Spleen (tissue), 13 donors: ENCODE measurements at regions of chr7 and their contacts with region 1.

Region 1: DNA sequence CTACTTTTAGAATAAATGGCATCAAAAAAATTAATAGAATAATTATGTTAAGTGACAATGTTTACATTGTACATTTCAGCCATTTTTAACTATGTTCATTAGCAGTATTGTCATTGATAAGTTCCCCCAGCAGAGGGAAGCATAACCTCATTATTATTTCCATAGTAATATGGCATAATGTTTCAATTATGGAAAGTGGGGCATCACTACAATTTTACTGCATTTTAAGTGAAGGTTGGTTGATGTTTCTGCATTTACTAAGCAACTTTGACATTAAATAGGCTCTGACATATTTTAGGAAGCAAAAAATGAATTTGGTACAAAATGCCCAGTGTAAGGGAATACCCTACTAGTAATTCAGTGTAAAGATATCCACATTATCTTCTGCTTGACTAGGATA is 218.3 kb downstream of the SEMA3A start:
- DNase-seq: no peak
- H3K4me3 ChIP-seq: no peak overlapping the region
- H3K27ac ChIP-seq: no peak overlapping the region
- H3K4me1 ChIP-seq: no peaks in the 10 kb centered on the region
- H3K27me3 ChIP-seq: no peaks in the 10 kb centered on the region
- CTCF ChIP-seq: peak in 10 of 11 experiments; percentile 15 to 68 (median 58)
- POLR2A ChIP-seq: no peak

Region 2: GRCh38 chr7:84058311-84059076 is 82.2 kb after region 1 on chr7:
- intact Hi-C with region 1: no loop called
- DNase-seq: no peak
- H3K4me3 ChIP-seq: no peak overlapping the region
- H3K27ac ChIP-seq: no peak overlapping the region
- H3K4me1 ChIP-seq: no peaks in the 10 kb centered on the region
- H3K27me3 ChIP-seq: no peaks in the 10 kb centered on the region
- CTCF ChIP-seq: no peak
- POLR2A ChIP-seq: no peak

Region 3: DNA sequence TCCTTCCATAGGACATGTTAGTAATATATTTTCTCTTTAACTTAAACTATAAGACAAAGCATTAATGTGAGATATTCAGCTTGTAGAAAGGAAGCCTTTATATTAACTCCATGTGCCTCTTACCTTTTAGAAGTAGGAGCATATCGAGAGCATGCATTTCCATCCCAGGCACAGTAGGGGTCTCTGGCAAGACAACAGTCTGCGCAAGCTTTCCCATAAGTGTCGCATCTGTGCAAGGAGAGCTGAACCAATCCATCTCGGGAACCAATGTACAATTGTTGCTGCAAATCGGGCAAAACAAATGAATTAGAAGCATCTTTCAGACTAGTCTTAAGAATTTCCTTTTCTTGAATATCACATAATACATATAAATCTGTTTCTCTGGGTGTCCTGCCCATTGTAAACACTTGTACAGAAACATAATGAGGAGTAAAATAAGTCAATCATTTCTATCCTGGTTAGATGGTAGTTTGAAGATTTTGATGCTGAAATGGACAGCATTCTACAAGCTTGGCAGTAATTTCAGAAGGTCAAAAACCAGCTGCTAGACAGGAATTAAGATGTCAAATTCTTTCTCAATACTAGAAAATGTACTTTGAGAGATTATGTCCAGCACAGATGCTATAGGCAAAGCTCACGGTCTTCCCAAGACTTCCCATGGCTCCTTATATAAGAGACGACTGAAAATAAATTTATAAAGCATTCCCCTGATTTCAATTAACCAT is 1038.8 kb after region 1 on chr7:
- intact Hi-C with region 1: loop called (anchors 5 kb)
- DNase-seq: no peak
- H3K4me3 ChIP-seq: no peak overlapping the region
- H3K27ac ChIP-seq: peak overlapping the region in 1 of 8 donors; percentile 3
- H3K4me1 ChIP-seq: no peaks in the 10 kb centered on the region
- H3K27me3 ChIP-seq: no peaks in the 10 kb centered on the region
- CTCF ChIP-seq: no peak
- POLR2A ChIP-seq: no peak